AG04449 (cell line): ENCODE measurements at regions of chr1 and their contacts with region 1.

Region 1: GRCh38 chr1:51296383-51297357 is 33.7 kb downstream of the TTC39A start:
- DNase-seq: no peak
- H3K4me3 ChIP-seq: peak overlapping the region; percentile 48
- CTCF ChIP-seq: peak; percentile 98

Region 2: DNA sequence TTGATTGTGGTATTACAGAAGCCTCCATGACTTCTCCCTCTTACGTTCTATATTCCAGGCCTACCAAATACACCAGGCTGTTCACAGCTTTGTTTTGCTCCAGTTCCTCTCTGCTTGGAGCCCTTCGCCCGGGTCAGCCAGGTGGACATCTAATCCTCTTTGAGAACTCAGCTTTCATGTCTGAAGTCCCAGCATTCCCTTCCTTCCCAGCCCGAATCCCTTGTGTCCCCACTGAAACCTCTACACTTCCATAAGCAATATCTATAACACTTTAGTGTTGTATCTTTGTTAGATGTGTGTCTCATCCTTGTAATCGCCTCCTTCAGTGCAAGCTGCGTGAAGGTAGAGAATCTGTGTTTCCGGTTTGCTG is 58.7 kb before region 1 on chr1:
- CTCF ChIA-PET with region 1: interaction called, 10 read pairs
- POLR2A ChIA-PET with region 1: interaction called, 4 read pairs
- DNase-seq: no peak
- H3K4me3 ChIP-seq: peak overlapping the region; percentile 96
- CTCF ChIP-seq: no peak

Region 3: GRCh38 chr1:51268634-51269033 is 28.0 kb before region 1 on chr1:
- CTCF ChIA-PET with region 1: interaction called, 32 read pairs
- POLR2A ChIA-PET with region 1: no interaction called
- DNase-seq: no peak
- H3K4me3 ChIP-seq: no peak overlapping the region
- CTCF ChIP-seq: no peak

Region 4: DNA sequence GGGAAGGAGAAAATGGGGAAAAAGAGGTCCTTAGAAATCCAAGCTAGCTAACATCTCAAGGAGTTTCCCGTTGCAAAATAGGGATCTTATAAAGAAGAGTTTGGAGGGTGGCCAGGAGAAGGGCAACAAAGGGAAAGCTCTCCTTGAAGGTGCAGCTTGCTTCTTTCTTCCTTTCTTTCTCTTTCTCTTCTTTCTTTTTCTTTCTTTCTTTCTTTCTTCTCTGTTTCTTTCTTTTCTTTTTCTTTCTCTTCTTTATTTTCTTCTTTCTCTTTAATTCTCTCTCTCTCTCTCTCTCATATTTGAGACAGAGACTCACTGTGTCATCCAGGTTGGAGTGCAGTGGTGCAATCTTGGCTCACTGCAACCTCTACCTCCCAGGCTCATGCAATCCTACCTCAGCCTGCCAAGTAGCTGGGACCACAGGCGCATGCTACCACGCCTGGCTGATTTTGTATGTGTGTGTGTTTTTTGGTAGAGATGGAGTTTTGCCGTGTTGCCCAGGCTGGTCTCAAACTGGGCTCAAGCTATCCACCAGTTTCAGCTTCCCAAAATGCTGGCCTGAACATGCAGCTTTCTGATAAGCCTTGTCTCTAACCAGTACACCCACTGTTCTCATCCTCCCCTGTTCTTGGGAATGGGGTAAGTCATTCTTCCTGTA is 16.2 kb before region 1 on chr1:
- CTCF ChIA-PET with region 1: interaction called, 83 read pairs
- POLR2A ChIA-PET with region 1: no interaction called
- DNase-seq: no peak
- H3K4me3 ChIP-seq: no peak overlapping the region
- CTCF ChIP-seq: no peak

Region 5: DNA sequence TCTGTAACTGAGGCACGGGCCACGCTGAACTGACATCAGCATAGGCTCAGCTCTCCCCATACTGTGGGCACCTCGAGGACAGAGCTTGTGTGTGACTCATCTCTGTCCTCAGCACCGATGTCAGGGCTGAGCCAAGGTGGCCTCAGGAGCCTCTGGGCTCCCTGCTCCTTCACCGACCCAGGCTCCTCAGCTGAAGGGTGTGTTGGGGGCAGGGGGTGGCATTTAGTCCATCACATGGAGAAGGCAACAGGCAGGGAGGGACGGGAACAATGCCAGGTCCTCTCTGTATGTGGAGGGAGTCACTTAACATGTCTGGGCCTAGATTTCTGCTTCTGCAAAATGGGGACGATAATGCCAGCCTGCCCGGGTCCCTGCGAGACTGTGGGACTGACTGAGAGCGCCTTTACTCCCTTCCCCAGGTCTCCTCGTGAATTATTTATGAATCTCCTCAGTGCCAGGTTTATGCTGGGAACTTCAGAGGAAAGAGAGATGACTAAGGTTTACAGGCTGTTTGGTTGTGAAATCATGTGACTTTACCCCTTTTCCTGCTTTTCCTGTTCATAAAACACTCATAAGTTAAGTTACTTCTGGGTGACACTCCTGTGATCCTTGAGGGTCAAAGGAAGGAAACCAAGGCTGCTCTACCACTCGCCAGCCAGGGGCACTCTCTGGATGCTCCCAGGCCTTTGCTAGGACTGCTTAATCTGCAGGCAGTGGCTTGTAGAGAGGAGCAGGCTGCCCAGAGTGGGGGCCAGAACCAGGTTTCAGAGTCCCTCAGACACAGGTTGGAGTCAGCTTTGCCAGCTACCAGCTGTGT is 17.5 kb after region 1 on chr1:
- CTCF ChIA-PET with region 1: interaction called, 64 read pairs
- POLR2A ChIA-PET with region 1: no interaction called
- DNase-seq: peak; percentile 24
- H3K4me3 ChIP-seq: no peak overlapping the region
- CTCF ChIP-seq: no peak

Region 6: GRCh38 chr1:51320967-51321923 is 24.6 kb after region 1 on chr1:
- CTCF ChIA-PET with region 1: interaction called, 64 read pairs
- POLR2A ChIA-PET with region 1: no interaction called
- DNase-seq: no peak
- H3K4me3 ChIP-seq: no peak overlapping the region
- CTCF ChIP-seq: no peak

Region 7: DNA sequence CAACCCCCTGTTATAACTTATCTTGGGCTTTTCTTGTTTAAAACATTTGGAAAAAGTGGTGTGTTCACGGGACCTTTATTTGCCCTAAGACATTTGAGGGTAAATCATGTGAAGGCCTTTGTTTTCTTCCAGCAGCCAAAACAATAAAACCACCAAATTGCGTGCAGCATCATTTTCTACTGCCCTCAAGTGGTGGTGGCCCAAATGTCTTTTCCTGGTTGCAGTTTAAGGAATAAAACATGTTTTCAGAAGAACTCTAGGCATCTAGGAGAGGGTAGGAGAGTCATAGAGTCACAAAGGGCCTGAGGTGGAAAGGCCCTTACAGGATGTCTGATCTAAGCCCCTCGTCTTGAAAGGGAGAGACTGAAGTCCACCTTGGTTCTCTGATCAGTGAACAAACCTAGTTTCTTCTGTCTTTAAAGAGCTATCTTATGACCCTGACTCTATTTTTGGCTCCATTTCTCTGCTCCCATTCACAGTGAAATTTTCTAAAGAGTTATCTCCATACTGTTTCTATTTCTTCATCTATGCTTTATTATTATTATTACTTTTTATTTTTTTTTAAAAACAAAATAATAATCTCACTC is 238.4 kb after region 1 on chr1:
- CTCF ChIA-PET with region 1: interaction called, 10 read pairs
- POLR2A ChIA-PET with region 1: no interaction called
- DNase-seq: no peak
- H3K4me3 ChIP-seq: no peak overlapping the region
- CTCF ChIP-seq: peak; percentile 70